PC-9 (cell line): ENCODE measurements at regions of chr19 and their contacts with region 1.

Region 1: DNA sequence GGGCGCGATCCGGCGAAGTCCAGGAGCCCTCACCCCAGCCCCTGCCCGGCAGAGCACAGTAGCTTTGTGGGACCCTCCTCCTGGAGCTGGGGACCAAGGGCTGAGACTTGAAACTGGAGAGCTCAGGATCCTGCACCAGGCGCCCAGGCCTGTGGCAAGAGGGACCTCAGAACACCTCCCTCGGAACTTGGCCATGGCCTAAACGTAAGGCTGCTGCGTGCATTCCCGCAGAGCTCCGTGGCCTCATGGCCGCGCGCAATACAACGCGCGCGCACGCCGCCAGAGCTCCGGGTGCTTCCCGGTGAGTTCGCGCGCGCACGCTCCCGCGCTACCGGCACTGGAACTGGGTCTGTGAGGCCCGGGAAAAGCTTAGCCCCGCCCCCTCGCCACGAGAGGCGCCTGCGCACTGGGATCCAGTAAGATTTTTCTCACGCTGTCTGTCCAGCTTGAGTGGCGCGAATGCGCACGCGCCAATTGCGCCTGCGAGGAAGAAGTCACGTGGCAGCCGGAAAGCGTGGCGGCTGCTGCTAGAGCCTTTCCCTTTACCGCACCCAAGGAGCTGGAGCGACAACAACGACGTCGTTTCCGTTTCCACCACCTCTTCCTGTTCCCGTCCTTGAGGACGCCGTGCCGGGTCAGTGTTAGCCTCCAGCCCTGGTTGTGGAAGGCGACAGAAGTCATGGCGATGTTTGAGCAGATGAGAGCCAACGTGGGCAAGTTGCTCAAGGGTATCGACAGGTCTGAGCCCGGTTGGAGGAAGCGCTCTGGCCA is at the start of gene EIF3K:
- DNase-seq: peak; percentile 96 to 99
- H3K4me3 ChIP-seq: peak within 1 kb of the TSS; percentile 87
- H3K27ac ChIP-seq: peak within 1 kb of the TSS; percentile 24
- H3K4me1 ChIP-seq: peaks cover 15% of the 10 kb centered on the region
- H3K27me3 ChIP-seq: no peaks in the 10 kb centered on the region
- CTCF ChIP-seq: no peak
- total RNA-seq, gene EIF3K: 230 and 292 TPM in 2 replicates

Region 2: GRCh38 chr19:38544034-38544958 is 74.5 kb before region 1 on chr19:
- CTCF ChIA-PET with region 1: no interaction called
- POLR2A ChIA-PET with region 1: interaction called, 4 read pairs
- intact Hi-C with region 1: loop called (anchors 1 kb)
- DNase-seq: peak; percentile 60 to 87
- H3K4me3 ChIP-seq: no peak overlapping the region
- H3K27ac ChIP-seq: peak overlapping the region; percentile 47
- H3K4me1 ChIP-seq: peaks cover 24% of the 10 kb centered on the region
- H3K27me3 ChIP-seq: no peaks in the 10 kb centered on the region
- CTCF ChIP-seq: peak; percentile 83

Region 3: DNA sequence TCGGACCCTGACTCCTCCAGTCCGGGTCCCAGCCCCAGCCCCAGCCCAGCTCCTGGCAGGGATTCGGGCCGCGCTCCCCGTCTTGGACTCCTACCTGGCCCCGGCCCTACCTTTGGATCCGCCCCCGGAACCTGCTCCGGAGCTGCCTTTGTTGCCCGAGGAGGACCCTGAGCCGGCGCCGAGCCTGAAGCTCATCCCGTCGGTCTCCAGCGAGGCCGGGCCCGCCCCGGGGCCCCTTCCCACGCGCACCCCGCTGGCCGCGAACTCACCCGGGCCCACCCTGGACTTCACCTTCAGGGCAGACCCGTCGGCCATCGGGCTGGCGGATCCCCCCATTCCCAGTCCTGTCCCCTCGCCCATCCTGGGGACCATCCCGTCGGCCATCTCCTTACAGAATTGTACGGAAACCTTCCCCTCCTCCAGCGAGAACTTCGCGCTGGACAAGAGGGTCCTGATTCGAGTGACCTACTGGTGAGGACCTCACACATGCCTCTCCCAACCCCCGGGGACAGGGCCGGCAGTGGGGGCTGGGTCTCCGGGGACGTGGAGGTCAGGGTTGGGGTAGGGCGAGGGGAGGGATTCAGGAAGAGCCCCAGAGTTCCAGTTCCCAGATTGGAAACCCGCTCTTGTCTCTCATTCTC is 896.9 kb after region 1 on chr19:
- CTCF ChIA-PET with region 1: no interaction called
- POLR2A ChIA-PET with region 1: interaction called, 11 read pairs
- intact Hi-C with region 1: no loop called
- DNase-seq: no peak
- H3K4me3 ChIP-seq: no peak overlapping the region
- H3K27ac ChIP-seq: no peak overlapping the region
- H3K4me1 ChIP-seq: no peaks in the 10 kb centered on the region
- H3K27me3 ChIP-seq: peaks cover 3% of the 10 kb centered on the region; the same call in 1 of the 2 replicates
- CTCF ChIP-seq: no peak